ENCODE measurements at regions of chr16 and their contacts with region 1.

Region 1: GRCh38 chr16:74998481-74999218 is at the start of gene ZNRF1:
- DNase-seq: peak; percentile 92
- H3K4me3 Mint-ChIP-seq: peak within 1 kb of the TSS; percentile 79
- H3K27ac Mint-ChIP-seq: peak within 1 kb of the TSS; percentile 83
- H3K4me1 Mint-ChIP-seq: peaks cover 25% of the 10 kb centered on the region
- H3K27me3 Mint-ChIP-seq: peaks cover 12% of the 10 kb centered on the region
- total RNA-seq, gene ZNRF1: 35.3 to 35.7 TPM

Region 2: DNA sequence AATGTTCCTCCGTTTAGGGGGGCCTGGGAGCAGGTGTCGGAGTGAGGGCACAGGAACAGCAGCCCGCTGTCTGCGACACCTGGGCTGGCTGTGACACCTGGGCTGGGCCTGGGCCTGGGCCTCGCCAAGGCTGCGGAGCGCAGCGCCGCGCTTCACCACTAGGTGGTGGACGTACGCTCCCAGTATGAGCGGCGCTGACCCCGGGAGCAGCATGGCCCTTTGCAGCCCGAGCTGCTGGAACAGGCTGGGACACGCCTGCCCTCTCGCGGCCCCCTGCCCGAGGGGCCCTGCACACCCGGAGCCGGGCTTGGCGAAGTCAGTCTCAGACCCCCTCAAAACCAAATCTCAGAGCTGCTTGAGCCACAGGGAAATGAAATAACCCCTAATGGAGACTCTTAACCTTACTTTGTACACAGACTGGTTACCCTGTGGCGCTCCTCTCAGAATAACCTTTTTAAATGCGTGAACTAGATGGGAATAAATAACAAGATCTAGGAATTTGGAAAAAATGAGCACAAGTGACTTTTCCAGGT is 185.5 kb before region 1 on chr16:
- CTCF ChIA-PET with region 1: no interaction called
- intact Hi-C with region 1: loop called (anchors 1 kb)
- DNase-seq: peak; percentile 84
- H3K4me3 Mint-ChIP-seq: no peak overlapping the region
- H3K27ac Mint-ChIP-seq: no peak overlapping the region
- H3K4me1 Mint-ChIP-seq: peaks cover 3% of the 10 kb centered on the region
- H3K27me3 Mint-ChIP-seq: no peaks in the 10 kb centered on the region

Region 3: DNA sequence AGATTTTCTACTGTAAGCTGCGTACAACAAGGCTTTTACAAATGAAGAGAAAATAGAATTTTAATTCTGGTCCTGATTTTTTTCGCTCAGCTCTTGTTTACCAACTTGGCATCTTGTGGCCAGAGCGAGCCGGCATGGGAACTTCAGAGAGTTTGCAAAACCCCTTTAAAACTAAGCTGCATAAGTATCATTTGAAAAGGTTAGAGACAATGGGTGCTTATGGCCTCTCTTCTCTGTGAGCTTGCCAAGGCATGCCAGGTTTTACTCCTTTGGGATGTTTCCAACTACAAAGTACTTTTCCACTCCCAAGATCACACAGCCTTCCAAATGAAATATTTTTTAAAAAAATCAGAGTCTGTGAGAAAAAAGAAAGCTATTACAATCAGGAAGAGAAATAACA is 161.6 kb before region 1 on chr16:
- CTCF ChIA-PET with region 1: no interaction called
- intact Hi-C with region 1: no loop called
- DNase-seq: no peak
- H3K4me3 Mint-ChIP-seq: no peak overlapping the region
- H3K27ac Mint-ChIP-seq: no peak overlapping the region
- H3K4me1 Mint-ChIP-seq: no peaks in the 10 kb centered on the region
- H3K27me3 Mint-ChIP-seq: peaks cover 2% of the 10 kb centered on the region

Region 4: DNA sequence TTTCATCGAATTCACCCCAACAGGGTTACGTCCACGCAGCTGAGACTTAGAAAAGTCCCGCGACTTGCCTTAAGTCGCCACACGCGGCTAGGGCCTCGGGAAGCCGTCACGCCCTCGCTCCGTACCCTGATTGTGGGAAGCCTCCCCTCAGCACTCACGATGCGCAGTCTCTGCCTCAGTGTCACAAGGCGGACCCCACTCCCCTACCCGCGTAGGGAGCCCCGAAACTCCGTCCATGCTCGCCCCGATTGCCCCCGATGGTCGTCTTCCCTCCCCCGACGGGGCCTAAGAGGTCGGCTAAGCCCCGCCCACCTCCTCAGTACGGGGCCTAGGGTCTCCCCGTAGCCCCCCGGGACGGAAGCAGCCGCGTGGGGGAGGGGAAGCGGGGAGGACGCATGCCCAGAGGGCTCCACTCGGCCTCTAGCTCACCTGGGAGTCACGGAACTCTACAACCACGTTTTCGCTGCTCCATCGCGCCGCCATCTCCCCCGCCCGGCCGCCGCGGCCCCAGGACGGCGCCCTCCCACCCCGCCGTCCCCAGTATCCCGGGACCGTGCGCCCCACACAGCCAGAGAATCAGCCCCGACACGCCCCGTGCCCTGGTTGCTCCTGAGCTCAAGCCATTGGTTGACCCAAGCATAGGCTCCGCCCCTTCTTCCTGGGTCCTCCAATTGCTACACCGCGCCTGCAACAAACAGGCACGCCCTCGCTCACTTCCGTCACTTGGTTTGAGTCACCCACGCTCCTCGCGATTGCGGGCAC is 13.9 kb before region 1 on chr16 and contains the start of gene WDR59:
- CTCF ChIA-PET with region 1: interaction called, 10 read pairs
- intact Hi-C with region 1: no loop called
- DNase-seq: peak; percentile 100
- H3K4me3 Mint-ChIP-seq: peak within 1 kb of the TSS; percentile 88
- H3K27ac Mint-ChIP-seq: peak within 1 kb of the TSS; percentile 73
- H3K4me1 Mint-ChIP-seq: peaks cover 16% of the 10 kb centered on the region
- H3K27me3 Mint-ChIP-seq: no peaks in the 10 kb centered on the region
- total RNA-seq, gene WDR59: 47.8 to 55.6 TPM

Region 5: DNA sequence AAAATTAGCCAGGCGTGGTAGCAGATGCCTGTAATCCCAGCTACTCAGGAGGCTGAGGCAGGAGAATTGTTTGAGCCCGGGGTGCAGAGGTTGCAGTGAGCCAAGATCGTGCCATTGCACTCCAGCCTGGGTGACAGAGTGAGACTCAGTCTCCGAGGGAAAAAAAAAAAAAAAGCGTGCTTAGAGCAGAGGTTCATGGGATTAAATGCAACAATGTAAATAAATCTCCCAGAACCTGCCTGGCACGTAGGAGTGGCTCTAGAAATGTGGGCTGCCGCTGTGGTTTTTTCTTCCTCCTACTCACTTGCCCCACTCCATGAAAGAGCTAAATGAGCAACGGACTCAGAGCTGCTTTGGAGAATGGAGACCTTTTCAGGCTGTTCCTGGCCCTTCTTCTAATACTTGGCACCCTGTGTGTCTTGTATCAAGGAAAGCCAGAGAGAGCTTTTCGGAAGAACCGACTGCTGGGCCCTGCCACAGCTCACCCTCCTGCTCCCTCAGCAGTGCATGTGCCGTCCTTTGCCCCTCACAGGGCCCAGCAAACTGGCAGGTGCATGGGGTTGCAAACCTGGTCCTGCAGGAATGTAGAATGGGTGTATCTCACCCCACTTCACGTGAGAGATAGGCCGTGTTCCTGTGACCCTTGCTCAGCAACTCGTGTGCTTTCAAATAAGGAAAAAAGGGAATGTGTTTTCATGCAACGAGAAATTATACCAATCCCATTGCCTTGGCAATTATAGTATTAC is 65.9 kb after region 1 on chr16:
- CTCF ChIA-PET with region 1: interaction called, 4 read pairs
- intact Hi-C with region 1: loop called (anchors 2 kb)
- DNase-seq: peak; percentile 65
- H3K4me3 Mint-ChIP-seq: peak overlapping the region; percentile 54
- H3K27ac Mint-ChIP-seq: no peak overlapping the region
- H3K4me1 Mint-ChIP-seq: peaks cover 25% of the 10 kb centered on the region
- H3K27me3 Mint-ChIP-seq: no peaks in the 10 kb centered on the region

Region 6: GRCh38 chr16:75074920-75075687 is 76.5 kb after region 1 on chr16:
- CTCF ChIA-PET with region 1: no interaction called
- intact Hi-C with region 1: loop called (anchors 1 kb)
- DNase-seq: peak; percentile 93
- H3K4me3 Mint-ChIP-seq: peak overlapping the region; percentile 34
- H3K27ac Mint-ChIP-seq: peak overlapping the region; percentile 85
- H3K4me1 Mint-ChIP-seq: peaks cover 40% of the 10 kb centered on the region
- H3K27me3 Mint-ChIP-seq: no peaks in the 10 kb centered on the region

Region 7: DNA sequence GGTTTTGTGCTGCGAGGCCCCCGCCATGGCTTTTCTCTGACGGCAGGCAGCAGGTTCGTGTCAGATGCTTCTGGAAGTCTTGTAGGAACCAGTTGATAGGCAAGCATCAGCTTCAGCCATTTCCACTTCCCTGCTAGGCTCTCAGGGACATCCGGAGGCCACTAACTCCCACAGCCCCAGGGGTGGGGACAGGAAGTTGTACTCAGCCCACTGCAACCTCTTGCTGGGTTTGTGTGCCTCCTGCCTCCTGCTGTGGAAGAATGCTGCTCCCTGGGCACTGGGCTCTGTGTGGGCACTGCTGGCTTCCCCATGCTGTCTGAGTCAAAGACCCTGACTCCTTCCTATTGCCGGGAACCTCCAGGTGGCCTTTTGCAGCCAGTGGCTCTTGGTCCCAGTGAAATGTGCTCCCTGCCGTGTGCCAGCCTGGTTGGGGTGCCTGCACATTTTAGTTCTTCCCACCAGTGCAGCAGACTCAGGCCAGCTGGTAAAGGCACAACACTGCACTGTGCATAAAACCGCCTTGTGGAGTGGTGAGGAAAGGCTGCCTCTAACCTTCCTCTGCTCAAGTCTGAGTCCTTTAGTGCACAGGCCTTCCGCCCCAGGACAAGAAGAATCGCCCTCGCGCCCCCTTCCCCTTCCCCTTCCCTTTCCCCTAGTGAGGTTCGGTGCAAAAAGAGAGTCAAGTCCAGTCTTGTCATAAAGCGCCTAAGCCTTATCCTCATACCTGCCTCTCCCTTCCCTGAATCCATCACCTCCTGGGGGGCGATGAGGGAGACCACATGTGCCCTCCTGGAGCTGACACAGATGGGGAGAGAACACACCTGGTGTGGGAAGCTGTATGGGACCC is 101.3 kb after region 1 on chr16:
- CTCF ChIA-PET with region 1: interaction called, 10 read pairs
- intact Hi-C with region 1: loop called (anchors 1 kb)
- DNase-seq: peak; percentile 74
- H3K4me3 Mint-ChIP-seq: no peak overlapping the region
- H3K27ac Mint-ChIP-seq: peak overlapping the region; percentile 68
- H3K4me1 Mint-ChIP-seq: peaks cover 39% of the 10 kb centered on the region
- H3K27me3 Mint-ChIP-seq: no peaks in the 10 kb centered on the region

Region 8: DNA sequence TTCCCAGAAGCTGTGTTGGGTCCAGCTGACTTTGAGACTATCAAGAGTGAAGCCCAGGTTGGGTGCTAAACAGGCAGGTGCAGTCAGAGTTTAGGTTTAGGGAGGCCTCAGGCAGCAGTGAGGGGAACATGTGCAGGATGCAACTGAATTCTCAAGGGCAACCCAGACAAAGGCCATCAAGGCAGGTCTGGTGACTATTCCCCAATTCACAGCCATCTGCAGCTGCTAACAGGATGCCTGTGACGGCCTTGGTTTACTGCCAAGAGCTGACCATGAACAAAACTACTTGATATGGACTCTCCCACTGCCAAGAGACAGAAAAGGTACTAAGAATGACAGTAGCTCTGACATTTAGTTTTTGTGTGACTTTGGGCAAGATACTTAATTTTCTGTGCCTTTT is 298.0 kb after region 1 on chr16:
- CTCF ChIA-PET with region 1: no interaction called
- intact Hi-C with region 1: no loop called
- DNase-seq: no peak
- H3K4me3 Mint-ChIP-seq: no peak overlapping the region
- H3K27ac Mint-ChIP-seq: no peak overlapping the region
- H3K4me1 Mint-ChIP-seq: no peaks in the 10 kb centered on the region
- H3K27me3 Mint-ChIP-seq: no peaks in the 10 kb centered on the region